ENCODE measurements at regions of chr7 and their contacts with region 1.

Region 1: GRCh38 chr7:79709574-79710409 is 256.3 kb upstream of the MAGI2 start:
- DNase-seq: no peak
- H3K4me3 ChIP-seq: no peak overlapping the region
- H3K27ac ChIP-seq: no peak overlapping the region
- H3K4me1 ChIP-seq: no peaks in the 10 kb centered on the region
- H3K27me3 ChIP-seq: no peaks in the 10 kb centered on the region
- CTCF ChIP-seq: no peak
- EP300 ChIP-seq: no peak
- POLR2A ChIP-seq: no peak

Region 2: DNA sequence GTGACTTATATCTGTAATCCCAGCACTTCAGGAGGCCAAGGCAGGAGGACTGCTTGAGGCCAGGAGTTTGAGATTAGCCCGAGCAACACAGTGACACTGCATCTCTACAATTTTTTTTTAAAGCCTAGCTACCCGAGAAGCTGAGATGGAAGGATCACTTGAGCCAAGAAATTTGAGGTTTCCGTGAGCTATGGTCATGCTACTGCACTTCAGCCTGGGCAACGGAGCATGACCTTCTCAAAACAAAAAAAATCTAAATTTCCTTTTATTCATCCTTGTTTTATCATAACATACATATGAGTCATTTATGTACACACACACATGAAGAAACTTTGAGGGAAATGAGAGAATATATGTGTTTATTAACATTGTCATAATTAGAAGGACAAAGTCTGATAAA is 21.2 kb after region 1 on chr7:
- intact Hi-C with region 1: loop called in 1 of 4 experiments (anchors 2 kb)
- DNase-seq: no peak
- H3K4me3 ChIP-seq: no peak overlapping the region
- H3K27ac ChIP-seq: no peak overlapping the region
- H3K4me1 ChIP-seq: no peaks in the 10 kb centered on the region
- H3K27me3 ChIP-seq: no peaks in the 10 kb centered on the region
- CTCF ChIP-seq: no peak
- EP300 ChIP-seq: no peak
- POLR2A ChIP-seq: no peak